Ascending aorta (tissue), 2 donors: ENCODE measurements at regions of chr7 and their contacts with region 1.

Region 1: GRCh38 chr7:151304856-151305255 is 36.8 kb upstream of the NUB1 start:
- DNase-seq: no peak
- H3K4me3 ChIP-seq: no peak overlapping the region
- H3K27ac ChIP-seq: no peak overlapping the region
- H3K4me1 ChIP-seq: peaks cover 3 to 4% of the 10 kb centered on the region in 2 donors
- H3K27me3 ChIP-seq: no peaks in the 10 kb centered on the region
- CTCF ChIP-seq: no peak

Region 2: DNA sequence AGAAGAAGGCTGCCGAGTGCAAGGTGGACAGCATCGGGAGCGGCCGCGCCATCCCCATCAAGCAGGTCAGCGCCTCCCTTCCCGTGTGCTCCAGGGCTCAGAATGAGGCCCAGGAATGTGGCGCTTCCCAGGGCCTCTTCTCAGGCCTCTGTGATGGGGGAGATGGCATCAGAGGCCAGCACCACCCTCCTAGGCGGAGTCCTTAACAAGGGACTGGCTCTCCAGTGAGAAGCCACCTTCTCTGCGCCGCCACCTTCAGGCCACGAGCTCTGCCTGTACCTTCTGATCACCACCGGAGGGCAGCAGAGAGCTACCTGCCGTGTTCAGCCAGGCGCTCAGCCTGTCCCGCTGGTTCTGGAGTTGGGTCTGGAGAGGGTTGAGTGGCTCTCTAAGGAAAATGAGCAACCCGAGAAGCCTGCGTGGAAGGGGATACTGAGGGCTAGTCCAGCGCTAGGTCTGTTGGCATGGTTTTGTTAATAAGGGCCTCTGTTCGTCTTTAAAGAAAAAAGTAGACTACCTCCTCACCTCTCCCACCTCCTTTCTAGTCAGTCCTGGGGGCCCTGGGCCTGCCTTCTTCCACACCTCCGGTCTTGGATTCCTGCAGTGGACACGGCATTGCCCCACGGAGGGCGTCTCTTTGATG is 180.9 kb before region 1 on chr7:
- intact Hi-C with region 1: loop called (anchors 2 kb)
- DNase-seq: peak; percentile 22 to 88
- H3K4me3 ChIP-seq: no peak overlapping the region
- H3K27ac ChIP-seq: no peak overlapping the region
- H3K4me1 ChIP-seq: peaks cover 3 to 5% of the 10 kb centered on the region in 2 donors
- H3K27me3 ChIP-seq: no peaks in the 10 kb centered on the region
- CTCF ChIP-seq: peak; percentile 89 to 98 (median 98)

Region 3: DNA sequence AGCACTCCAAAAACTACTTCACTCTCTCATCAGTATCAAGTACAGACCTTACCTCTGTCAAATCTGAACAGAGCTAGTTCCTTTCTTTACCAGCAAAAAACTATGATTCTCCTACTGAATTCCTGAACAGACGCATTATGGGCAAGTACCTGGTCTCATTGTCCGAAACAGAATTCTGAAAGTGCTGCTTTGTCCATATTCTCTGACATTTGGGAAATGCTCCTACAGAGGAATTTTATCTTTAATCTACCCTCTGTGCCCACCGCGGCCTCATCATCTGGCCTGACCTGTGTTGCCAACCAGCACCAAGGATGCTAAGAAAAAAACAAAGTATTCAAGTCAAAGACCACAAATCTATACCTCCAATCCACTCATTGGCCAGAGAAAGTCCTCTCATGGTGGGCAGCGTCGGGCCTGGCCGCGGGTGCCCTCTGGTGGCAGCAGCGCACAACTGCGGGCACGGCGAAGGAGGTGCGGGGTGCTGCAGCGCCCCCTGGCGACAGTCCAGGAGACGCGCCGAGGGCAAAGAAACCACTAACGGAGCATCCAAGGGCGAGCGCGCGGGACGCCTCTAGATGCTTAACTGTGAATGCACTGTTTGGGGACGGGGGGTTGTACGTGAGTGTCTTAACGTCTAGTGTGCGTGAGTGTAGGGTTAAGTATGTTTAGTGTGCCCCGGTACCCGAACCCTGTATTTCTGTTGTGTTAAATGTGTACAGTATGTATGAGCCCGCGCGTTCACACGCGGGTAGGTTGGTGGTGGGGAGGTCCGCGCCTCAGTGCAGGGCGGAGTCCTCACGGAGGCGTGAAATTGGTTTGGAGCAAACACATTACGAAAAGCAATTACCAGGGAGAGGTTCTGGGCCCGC is 132.3 kb before region 1 on chr7:
- intact Hi-C with region 1: loop called (anchors 2 kb)
- DNase-seq: peak in 1 of 2 donors; percentile 86
- H3K4me3 ChIP-seq: no peak overlapping the region
- H3K27ac ChIP-seq: no peak overlapping the region
- H3K4me1 ChIP-seq: peaks cover 0 to 4% of the 10 kb centered on the region in 2 donors
- H3K27me3 ChIP-seq: peaks cover 11% of the 10 kb centered on the region
- CTCF ChIP-seq: peak; percentile 99 to 100 (median 100)

Region 4: DNA sequence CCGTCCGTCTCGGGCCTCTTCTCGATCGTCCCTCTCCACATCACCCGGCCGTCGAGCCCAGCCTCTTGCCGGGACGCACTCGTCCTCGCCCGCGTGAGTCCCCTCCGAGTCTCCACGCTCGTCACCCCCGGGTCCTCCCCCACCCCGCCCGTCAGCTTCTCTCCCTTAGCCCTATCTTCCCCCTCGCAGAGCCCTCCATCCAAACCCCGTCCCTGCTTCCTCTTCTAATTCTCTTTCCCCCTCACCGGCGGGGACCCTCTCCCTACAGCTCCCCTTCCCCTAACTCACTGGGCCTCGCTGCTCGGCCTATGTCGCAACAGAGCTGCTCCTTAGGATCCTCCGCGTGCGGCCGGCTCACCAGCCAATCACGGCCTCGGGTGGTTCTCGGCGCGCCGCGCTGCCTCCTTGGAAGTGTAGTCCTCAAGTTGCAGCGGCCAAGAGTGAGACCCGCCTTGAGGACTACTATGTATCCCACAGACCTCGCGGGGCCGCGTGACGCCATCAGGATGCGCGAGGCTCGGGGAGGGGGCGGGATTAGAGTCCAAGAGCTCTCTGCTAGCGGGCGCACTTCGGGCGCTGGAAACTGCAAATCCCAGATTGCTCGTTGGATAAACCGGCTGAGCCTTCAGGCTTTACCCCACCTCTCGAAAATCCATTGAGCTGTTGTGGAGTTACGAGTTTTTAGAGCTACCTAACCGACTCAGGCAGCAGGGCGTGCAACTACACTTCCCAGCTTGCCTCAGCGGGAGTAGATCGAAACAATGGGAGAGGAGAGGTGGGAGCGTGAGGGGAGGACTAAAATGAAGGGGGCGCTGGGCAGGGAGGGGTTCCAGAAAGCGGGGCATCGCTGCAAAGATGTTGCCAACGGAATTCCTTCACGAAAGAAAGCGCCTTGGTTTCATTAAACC is 77.7 kb before region 1 on chr7 and contains the start of gene ABCF2:
- intact Hi-C with region 1: loop called (anchors 5 kb)
- DNase-seq: peak; percentile 98 to 100
- H3K4me3 ChIP-seq: peak within 1 kb of the TSS; percentile 79 to 94
- H3K27ac ChIP-seq: peak within 1 kb of the TSS; percentile 63 to 72
- H3K4me1 ChIP-seq: peaks cover 7 to 12% of the 10 kb centered on the region in 2 donors
- H3K27me3 ChIP-seq: no peaks in the 10 kb centered on the region
- CTCF ChIP-seq: no peak
- total RNA-seq, gene ABCF2: 85.3 TPM

Region 5: GRCh38 chr7:151251328-151251972 is 53.4 kb before region 1 on chr7:
- intact Hi-C with region 1: loop called (anchors 1 kb)
- DNase-seq: peak in 1 of 2 donors; percentile 81
- H3K4me3 ChIP-seq: peak overlapping the region; percentile 74 to 87
- H3K27ac ChIP-seq: peak overlapping the region; percentile 95 to 99
- H3K4me1 ChIP-seq: peaks cover 21 to 43% of the 10 kb centered on the region in 2 donors
- H3K27me3 ChIP-seq: no peaks in the 10 kb centered on the region
- CTCF ChIP-seq: no peak

Region 6: DNA sequence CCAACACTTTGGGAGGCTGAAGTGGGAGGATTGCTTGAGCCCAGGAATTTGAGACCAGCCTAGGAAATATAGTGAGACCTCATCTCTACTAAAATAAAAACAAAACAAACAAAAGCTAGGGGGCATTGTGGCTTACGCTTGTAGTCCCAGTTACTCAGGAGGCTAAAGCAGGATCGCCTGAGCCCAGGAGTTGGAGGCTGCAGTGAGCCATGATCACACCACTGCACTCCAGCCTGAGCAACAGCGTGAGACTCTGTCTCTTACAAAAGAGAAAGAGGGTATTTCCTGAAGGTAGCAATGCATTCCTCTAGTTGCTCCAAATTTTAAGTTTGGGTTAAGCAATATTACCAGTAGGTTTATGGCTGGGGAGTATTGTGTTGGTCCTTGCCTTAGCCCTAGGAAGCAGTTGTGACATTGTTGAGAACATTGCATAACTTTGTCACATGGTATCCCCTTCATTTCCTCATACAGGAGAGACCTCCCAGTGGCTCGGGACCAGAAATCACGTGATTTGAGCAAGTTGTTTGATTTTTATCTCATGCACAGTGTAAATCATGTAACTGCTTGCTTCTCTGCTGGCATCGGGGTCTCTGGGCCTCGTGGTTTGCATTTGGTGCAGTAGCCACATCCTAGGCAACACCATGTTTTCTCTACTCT is 33.0 kb before region 1 on chr7:
- intact Hi-C with region 1: loop called (anchors 1 kb)
- DNase-seq: peak in 1 of 2 donors; percentile 81
- H3K4me3 ChIP-seq: no peak overlapping the region
- H3K27ac ChIP-seq: peak overlapping the region; percentile 32 to 58
- H3K4me1 ChIP-seq: peaks cover 4 to 20% of the 10 kb centered on the region in 2 donors
- H3K27me3 ChIP-seq: no peaks in the 10 kb centered on the region
- CTCF ChIP-seq: no peak

Region 7: GRCh38 chr7:151276666-151277590 is 27.9 kb before region 1 on chr7:
- intact Hi-C with region 1: loop called (anchors 1 kb)
- DNase-seq: peak in 1 of 2 donors; percentile 71
- H3K4me3 ChIP-seq: peak overlapping the region; percentile 55 to 74
- H3K27ac ChIP-seq: peak overlapping the region; percentile 63 to 67
- H3K4me1 ChIP-seq: peaks cover 6 to 22% of the 10 kb centered on the region in 2 donors
- H3K27me3 ChIP-seq: no peaks in the 10 kb centered on the region
- CTCF ChIP-seq: no peak

Region 8: DNA sequence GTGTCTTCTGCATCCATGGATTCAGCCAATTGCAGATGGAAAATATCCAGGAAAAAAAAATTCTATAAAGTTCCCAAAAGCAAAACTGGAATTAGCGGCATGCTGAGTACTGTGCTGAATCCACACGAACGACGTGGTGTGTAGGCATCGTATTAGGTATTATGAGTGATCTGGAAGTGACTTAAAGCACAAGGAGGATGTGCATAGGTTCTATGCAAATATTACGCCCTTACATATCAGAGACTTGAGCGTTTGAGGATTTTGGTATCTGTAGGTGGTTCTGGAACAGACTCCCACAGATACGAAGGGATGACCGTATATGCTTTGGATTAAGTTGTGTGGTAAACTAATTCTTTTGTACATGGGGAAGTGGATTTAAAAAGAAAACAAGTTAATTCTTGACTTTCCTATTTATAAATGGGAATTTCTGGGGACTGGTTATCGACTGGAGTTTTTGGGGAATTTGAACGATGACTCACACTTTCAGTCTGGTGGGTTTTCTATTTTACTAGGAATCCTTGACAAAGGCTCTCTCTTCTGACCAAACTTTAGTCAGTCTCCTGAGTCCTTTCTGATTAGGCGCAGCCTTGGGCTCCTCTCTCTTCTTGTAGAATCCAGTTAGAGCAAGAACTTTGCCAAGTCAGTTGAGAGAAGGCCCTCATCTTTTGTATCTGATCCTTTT is 31.3 kb after region 1 on chr7:
- intact Hi-C with region 1: no loop called
- DNase-seq: no peak
- H3K4me3 ChIP-seq: no peak overlapping the region
- H3K27ac ChIP-seq: no peak overlapping the region
- H3K4me1 ChIP-seq: peaks cover 0 to 3% of the 10 kb centered on the region in 2 donors
- H3K27me3 ChIP-seq: no peaks in the 10 kb centered on the region
- CTCF ChIP-seq: no peak